ENCODE measurements at regions of chr19 and their contacts with region 1.

Region 1: GRCh38 chr19:57978586-57979289 is 4.4 kb upstream of the C19orf18 start:
- DNase-seq: no peak
- H3K4me3 ChIP-seq: no peak overlapping the region
- CTCF ChIP-seq: no peak

Region 2: GRCh38 chr19:57927587-57927986 is 51.2 kb before region 1 on chr19:
- in situ Hi-C with region 1: no loop called
- DNase-seq: no peak
- H3K4me3 ChIP-seq: no peak overlapping the region
- CTCF ChIP-seq: no peak

Region 3: GRCh38 chr19:58079792-58080191 is 101.1 kb after region 1 on chr19:
- in situ Hi-C with region 1: loop called (anchors 10 kb)
- DNase-seq: no peak
- H3K4me3 ChIP-seq: no peak overlapping the region
- CTCF ChIP-seq: no peak